ENCODE measurements at regions of chr3 and their contacts with region 1.

Region 1: DNA sequence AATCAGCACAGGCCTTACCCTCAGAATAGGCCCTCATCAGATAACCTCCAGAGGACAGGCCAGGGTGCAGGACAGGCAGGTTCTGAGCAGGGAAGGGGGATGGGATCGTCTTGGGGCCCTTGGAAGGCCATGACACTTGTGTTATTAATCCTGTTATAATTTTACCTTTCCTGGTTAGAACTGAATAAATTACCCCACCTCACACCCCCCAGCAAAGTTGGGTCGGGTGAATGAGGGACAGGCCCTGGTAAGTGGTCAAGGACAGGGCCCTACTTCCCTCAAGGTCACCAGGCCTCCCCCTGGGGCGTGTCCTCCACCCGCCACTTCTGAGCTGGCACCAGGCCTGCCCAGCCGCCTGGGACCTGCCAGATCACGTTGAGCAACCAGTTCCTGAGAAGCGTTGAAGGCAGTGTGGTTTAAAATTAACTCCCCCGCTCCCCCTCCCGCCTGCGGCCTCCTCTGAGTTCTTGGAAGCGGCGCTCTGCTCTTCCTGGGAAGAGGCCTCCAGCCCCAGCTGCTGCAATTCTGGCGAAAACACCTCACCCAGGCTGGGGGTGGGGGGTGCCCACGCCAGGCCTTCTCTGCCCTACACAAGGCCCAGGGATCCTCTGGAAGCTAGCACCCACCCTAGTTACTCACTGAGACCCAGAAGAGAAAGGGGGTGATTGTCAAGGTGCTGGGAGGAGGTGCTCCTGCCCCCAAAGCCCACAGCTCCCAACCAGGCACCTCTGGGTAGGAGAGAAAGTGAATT is 10.6 kb downstream of the CISH start:
- DNase-seq: peak; percentile 90
- ATAC-seq: peak; percentile 80
- H3K4me3 ChIP-seq: peak overlapping the region; percentile 47 to 72 (median 49); a peak in 5 of 6 replicates
- H3K27ac ChIP-seq: peak overlapping the region; percentile 97
- H3K4me1 ChIP-seq: peaks cover 79% of the 10 kb centered on the region
- H3K27me3 ChIP-seq: no peaks in the 10 kb centered on the region
- CTCF ChIP-seq: peak; percentile 29; the same call in 1 of the 2 replicates
- EP300 ChIP-seq: peak in 1 of 2 experiments; percentile 74; a peak in 2 of 4 replicates
- POLR2A ChIP-seq: peak in 1 of 2 experiments; percentile 68; a peak in 2 of 4 replicates
- RAD21 ChIP-seq: no peak

Region 2: DNA sequence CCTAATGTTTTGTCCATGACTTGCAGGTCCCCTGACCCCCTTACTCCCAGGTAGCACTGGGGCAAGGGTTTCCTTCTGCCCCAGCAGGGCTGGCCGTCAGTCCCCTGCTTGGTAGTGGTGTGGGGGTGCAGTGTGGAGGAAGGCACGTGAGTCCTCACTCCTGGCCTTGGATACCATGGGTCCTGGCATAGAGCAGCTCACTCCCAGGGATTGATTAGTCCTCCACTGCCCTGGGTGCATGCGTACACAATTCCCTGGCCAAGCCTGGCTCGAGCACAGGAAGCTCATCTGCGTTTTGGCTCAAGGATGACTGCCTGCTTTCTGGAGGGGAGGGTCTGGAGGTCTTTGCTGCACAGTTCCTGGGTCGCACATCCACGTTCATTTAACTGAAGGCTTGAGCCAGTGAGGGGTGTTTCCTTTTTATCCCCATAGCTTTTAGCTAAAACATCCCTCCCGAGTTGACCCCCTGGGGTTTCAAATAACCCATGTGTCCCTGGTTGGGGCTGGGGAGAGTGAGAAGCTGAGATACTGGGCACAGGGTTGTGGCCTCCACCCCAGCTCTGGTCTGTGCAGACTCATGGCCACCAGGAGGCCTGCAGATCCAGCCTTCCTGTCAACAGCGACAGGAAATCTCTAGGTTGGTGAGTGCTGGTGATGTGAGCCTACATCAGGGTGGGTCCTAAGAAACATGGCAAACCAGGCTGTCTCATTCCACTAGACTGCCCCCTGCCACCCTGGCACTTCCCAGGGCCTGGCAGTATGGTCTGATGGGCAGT is 20.1 kb before region 1 on chr3:
- CTCF ChIA-PET with region 1: no interaction called
- POLR2A ChIA-PET with region 1: interaction called, 20 read pairs
- in situ Hi-C with region 1: no loop called
- intact Hi-C with region 1: no loop called
- DNase-seq: no peak
- ATAC-seq: peak; percentile 51
- H3K4me3 ChIP-seq: no peak overlapping the region
- H3K27ac ChIP-seq: no peak overlapping the region
- H3K4me1 ChIP-seq: peaks cover 46% of the 10 kb centered on the region
- H3K27me3 ChIP-seq: no peaks in the 10 kb centered on the region
- CTCF ChIP-seq: no peak
- EP300 ChIP-seq: no peak
- POLR2A ChIP-seq: no peak
- RAD21 ChIP-seq: no peak

Region 3: DNA sequence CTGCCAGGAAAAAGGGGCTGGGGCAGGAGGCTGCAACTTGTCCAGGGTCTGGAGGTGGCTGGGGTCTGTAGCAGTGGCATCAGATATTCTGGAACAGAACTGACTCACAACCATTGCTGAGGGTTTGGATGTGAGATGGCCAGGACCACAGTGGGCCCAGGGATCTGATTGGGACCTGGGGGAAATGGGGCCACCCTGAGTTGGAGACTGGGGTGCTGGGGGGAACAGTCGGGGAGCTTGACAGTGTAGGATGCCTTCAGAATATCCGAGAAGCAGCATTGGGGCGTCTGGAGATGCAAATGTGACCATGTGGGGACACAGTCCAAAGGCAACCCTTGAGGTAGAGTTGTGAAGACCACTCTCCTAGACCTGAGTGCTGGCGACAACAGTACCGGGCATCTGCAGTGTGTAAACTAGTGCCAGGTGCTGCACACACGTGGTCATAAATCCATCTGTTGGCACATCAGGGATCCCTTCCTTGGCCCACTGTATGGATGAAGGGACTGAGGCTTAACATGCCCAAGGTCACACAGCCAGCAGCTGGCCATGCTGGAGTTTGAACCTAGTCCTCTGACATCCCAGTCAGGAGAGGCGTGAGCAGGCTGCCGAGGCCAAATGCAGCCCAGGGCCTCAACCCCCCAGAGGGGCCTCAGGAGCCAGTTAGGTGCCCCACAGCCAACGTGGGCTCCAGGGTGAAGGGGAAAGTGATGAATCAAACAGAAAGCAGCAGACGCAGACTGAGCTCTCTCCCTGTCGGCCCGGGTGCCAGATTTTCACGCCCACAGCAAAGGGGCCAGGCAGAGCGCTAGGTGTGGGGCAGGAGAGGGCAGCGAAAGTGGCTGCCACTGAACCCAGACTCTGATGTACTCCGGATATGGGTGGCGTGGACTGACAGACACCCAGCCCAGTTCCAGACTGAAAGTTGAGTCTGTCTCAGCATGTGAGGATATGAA is 12.9 kb before region 1 on chr3:
- CTCF ChIA-PET with region 1: no interaction called
- POLR2A ChIA-PET with region 1: interaction called, 176 read pairs
- in situ Hi-C with region 1: no loop called
- intact Hi-C with region 1: no loop called
- DNase-seq: peak; percentile 57
- ATAC-seq: peak; percentile 55
- H3K4me3 ChIP-seq: peak overlapping the region in 2 of 3 experiments; percentile 21 to 49; a peak in 3 of 6 replicates
- H3K27ac ChIP-seq: peak overlapping the region; percentile 99
- H3K4me1 ChIP-seq: peaks cover 100% of the 10 kb centered on the region
- H3K27me3 ChIP-seq: no peaks in the 10 kb centered on the region; a peak in 1 of 5 replicates
- CTCF ChIP-seq: no peak
- EP300 ChIP-seq: peak in 1 of 2 experiments; percentile 76; a peak in 3 of 4 replicates
- POLR2A ChIP-seq: peak; percentile 40 to 44; a peak in 2 of 4 replicates
- RAD21 ChIP-seq: peak; percentile 40; the same call in 1 of the 2 replicates

Measured in HepG2 (cell line).